Colonic mucosa (tissue), 4 donors: ENCODE measurements at regions of chrX and their contacts with region 1.

Region 1: GRCh38 chrX:139559383-139560042 is 29.0 kb downstream of the F9 start:
- DNase-seq: peak; percentile 44
- H3K4me3 ChIP-seq: no peak overlapping the region
- H3K27ac ChIP-seq: no peak overlapping the region
- H3K4me1 ChIP-seq: no peaks in the 10 kb centered on the region
- H3K27me3 ChIP-seq: no peaks in the 10 kb centered on the region
- CTCF ChIP-seq: no peak

Region 2: GRCh38 chrX:138775517-138775916 is 784.0 kb before region 1 on chrX:
- intact Hi-C with region 1: loop called (anchors 5 kb)
- DNase-seq: no peak
- H3K4me3 ChIP-seq: no peak overlapping the region
- H3K27ac ChIP-seq: no peak overlapping the region
- H3K4me1 ChIP-seq: no peaks in the 10 kb centered on the region
- H3K27me3 ChIP-seq: no peaks in the 10 kb centered on the region
- CTCF ChIP-seq: peak; percentile 23

Region 3: GRCh38 chrX:139126493-139126892 is 433.0 kb before region 1 on chrX:
- intact Hi-C with region 1: loop called (anchors 5 kb)
- DNase-seq: peak; percentile 21
- H3K4me3 ChIP-seq: no peak overlapping the region
- H3K27ac ChIP-seq: no peak overlapping the region
- H3K4me1 ChIP-seq: no peaks in the 10 kb centered on the region
- H3K27me3 ChIP-seq: no peaks in the 10 kb centered on the region
- CTCF ChIP-seq: peak; percentile 46